Activated CD4-positive, alpha-beta T cell treated with anti-CD3 and anti-CD28 coated beads, Interleukin-2, amount 10 ng/mL, durations not matched to agents 24 days and 14 days (primary cell): ENCODE measurements at regions of chr3 and their contacts with region 1.

Region 1: GRCh38 chr3:52253314-52254304 is 8.1 kb downstream of the PPM1M start:
- DNase-seq: peak; percentile 95
- H3K4me3 Mint-ChIP-seq: peak overlapping the region; percentile 88
- H3K27ac Mint-ChIP-seq: peak overlapping the region; percentile 99
- H3K4me1 Mint-ChIP-seq: peaks cover 77% of the 10 kb centered on the region
- H3K27me3 Mint-ChIP-seq: peaks cover 2% of the 10 kb centered on the region

Region 2: GRCh38 chr3:50600841-50601591 is 1652.6 kb before region 1 on chr3:
- intact Hi-C with region 1: loop called (anchors 10 kb)
- DNase-seq: peak; percentile 95
- H3K4me3 Mint-ChIP-seq: peak overlapping the region; percentile 93
- H3K27ac Mint-ChIP-seq: peak overlapping the region; percentile 98
- H3K4me1 Mint-ChIP-seq: peaks cover 74% of the 10 kb centered on the region
- H3K27me3 Mint-ChIP-seq: no peaks in the 10 kb centered on the region

Region 3: DNA sequence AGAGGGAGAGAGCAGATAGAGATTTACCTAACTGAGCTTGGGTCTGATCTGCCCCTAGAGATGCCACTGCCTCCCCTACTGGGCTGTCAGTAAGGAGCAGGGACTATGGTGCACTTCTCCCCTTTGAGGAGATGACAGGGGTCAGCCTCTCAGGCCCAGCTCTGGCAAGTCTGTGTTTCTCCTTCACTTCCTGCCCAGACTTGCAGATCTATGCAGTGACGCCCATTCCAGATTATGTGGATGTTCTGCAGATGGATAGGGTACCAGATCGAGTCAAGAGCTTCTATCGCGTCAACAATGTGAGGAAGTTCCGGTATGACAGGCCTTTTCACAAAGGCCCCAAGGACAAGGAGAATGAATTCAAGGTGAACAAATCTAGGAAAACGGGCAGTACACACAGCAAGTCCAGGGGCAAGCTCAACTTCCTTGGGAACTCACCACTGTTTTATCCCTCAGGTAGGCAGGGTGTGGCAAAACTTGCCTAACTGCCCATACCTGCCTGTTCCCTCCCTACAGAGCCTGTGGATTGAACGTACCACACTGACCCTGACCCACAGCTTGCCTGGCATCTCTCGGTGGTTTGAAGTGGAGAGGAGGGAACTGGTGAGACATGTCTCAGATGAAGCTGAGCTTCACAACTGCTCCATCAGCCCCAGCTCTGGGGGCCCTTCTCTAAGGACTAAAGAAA is 897.6 kb before region 1 on chr3:
- intact Hi-C with region 1: no loop called
- DNase-seq: no peak
- H3K4me3 Mint-ChIP-seq: no peak overlapping the region
- H3K27ac Mint-ChIP-seq: no peak overlapping the region
- H3K4me1 Mint-ChIP-seq: peaks cover 2% of the 10 kb centered on the region
- H3K27me3 Mint-ChIP-seq: no peaks in the 10 kb centered on the region

Region 4: DNA sequence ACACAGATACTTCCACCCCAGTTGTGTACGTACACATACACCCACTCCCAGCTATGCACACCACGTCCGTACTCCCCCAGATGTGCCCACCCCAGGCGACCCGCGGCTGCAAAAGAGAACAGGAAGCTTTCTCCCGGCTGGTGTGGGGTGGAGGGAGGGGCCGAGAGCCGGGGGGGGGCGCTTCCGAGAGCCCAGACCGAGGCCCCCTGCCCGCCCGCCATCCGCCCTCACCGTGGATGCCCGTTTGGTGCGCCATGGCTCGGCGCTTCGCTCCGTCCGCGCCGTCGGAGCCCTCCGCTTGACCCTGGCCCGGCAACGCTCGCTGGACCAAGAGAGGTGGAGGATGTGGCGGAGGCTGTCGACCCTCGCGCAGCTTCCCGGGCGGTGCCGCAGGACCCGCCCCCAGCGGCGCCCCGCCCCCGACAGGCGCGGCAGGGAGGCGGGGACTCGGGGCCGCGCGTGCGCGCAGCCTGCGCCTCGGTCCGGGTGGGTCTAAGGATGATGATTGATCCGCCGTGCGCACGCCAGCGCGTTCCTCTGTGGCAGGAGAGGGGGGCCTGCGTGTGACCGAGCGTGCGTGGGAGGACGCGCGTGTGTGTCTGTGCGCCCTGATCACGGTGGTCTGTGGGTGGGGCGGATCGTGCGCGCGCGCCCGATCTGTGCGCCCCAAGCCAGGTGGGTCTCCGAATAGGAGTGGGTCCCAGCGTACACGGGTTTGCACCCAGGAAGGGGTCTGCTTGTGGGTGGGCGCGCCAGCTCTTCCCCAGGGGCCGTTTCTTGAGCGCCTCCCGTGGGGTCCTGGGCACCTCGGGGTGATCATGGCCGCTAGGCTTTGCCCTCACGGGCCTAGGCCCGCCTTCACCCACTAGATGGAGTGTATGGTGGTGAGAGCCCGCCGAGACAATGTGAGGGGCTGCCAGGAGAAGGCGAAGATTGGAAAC is 14.6 kb before region 1 on chr3 and contains the start of gene TWF2:
- intact Hi-C with region 1: loop called (anchors 1 kb)
- DNase-seq: peak; percentile 97
- H3K4me3 Mint-ChIP-seq: peak within 1 kb of the TSS; percentile 93
- H3K27ac Mint-ChIP-seq: peak within 1 kb of the TSS; percentile 99
- H3K4me1 Mint-ChIP-seq: peaks cover 62% of the 10 kb centered on the region
- H3K27me3 Mint-ChIP-seq: no peaks in the 10 kb centered on the region
- total RNA-seq, gene TWF2: 80.3 and 87.0 TPM in 2 replicates

Region 5: DNA sequence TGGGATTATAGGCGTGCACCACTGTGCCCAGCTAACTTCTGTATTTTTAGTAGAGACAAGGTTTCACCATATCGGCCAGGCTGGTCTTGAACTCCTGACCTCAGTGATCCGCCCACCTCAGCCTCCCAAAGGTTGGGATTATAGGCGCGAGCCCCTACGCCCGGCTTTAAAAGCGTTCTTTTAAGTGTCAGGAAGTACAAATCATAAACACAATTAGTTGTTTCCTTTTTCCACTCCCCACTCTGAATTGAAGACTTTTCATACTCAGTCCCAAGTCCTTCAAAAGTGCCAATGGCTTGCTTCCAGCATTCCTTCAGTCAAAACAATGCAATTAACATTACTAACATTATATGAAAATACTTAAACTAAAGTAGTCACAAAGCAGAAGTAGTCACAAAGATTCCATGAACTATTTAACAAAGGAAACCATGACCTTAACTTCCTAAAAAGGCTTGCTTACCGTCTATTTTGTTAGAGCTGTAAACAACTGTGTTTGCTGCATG is 16.7 kb after region 1 on chr3:
- intact Hi-C with region 1: loop called (anchors 1 kb)
- DNase-seq: no peak
- H3K4me3 Mint-ChIP-seq: peak overlapping the region; percentile 71
- H3K27ac Mint-ChIP-seq: peak overlapping the region; percentile 80
- H3K4me1 Mint-ChIP-seq: peaks cover 74% of the 10 kb centered on the region
- H3K27me3 Mint-ChIP-seq: no peaks in the 10 kb centered on the region

Region 6: DNA sequence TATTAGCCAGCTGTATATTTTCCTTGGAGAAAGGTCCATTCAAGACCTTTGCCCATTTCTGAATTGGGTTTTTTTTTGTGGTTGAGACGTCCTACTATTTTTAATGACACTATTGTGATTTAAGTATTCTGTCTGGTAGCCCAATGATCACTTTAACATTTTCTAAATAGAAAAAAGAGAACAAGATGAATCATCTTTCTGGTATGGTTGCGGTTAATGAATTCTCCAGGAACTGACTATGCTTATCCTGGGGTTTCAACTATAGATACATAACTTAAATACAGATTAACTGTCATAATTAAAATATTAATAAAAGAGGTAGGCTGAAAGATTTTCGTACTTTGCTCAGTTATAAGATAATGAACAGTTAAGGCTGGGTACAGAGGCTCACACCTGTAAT is 380.2 kb after region 1 on chr3:
- intact Hi-C with region 1: no loop called
- DNase-seq: no peak
- H3K4me3 Mint-ChIP-seq: no peak overlapping the region
- H3K27ac Mint-ChIP-seq: no peak overlapping the region
- H3K4me1 Mint-ChIP-seq: no peaks in the 10 kb centered on the region
- H3K27me3 Mint-ChIP-seq: no peaks in the 10 kb centered on the region